ENCODE measurements at regions of chr11 and their contacts with region 1.

Region 1: GRCh38 chr11:207208-207862 is at the starts of genes BET1L and RIC8A:
- DNase-seq: peak; percentile 99
- H3K4me3 Mint-ChIP-seq: peak within 1 kb of the TSS; percentile 98
- H3K27ac Mint-ChIP-seq: peak within 1 kb of the TSS; percentile 100
- H3K4me1 Mint-ChIP-seq: peaks cover 29% of the 10 kb centered on the region
- H3K27me3 Mint-ChIP-seq: no peaks in the 10 kb centered on the region
- total RNA-seq, gene BET1L: 43.6 and 46.9 TPM in 2 replicates
- total RNA-seq, gene RIC8A: 118 and 128 TPM in 2 replicates

Region 2: DNA sequence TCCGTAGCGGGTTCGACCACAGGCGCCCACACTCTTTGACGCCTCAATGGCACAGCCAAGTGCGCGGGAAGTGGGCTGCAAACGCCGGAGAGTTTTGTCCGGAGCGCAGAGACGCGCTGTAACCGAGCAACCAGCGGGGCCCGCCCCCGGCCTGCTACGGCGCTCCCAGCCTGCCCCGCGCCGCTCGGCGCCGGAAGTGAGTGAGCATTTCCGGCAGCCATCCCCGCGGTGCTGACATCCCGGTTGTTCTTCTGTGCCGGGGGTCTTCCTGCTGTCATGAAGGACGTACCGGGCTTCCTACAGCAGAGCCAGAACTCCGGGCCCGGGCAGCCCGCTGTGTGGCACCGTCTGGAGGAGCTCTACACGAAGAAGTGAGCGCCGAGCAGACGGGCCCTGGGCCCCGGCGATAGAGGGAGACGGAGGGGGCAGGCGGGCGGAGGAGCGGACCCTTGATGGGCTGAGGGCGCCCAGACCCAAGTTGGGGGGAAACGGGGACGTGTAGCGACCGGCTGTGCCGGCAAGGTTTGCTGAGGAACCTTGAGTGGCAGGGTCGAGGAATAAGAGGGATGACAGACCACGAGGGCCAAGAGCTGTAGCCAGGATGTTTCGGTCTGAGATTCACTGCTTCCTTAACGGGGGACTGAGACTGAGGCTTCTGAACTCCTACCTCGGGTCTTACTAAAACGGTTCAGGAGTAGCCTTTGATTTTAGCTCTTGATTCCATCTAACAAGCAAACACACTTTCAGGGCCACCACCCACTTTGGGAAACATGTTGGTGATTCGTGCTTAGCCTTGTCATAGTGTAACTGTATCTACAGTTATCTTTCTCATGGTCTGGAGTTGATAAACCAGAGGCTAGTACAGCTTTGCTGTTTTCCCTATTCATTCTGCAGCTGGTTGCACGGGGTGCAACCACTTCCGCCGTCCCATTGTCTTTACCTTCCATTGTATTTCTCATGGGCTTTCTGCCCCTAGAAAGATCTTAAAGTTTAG is 29.7 kb after region 1 on chr11 and contains the start of gene PSMD13:
- intact Hi-C with region 1: loop called (anchors 1 kb)
- DNase-seq: peak; percentile 97
- H3K4me3 Mint-ChIP-seq: peak within 1 kb of the TSS; percentile 97
- H3K27ac Mint-ChIP-seq: peak within 1 kb of the TSS; percentile 100
- H3K4me1 Mint-ChIP-seq: peaks cover 46% of the 10 kb centered on the region
- H3K27me3 Mint-ChIP-seq: no peaks in the 10 kb centered on the region
- total RNA-seq, gene PSMD13: 272 and 275 TPM in 2 replicates

Region 3: DNA sequence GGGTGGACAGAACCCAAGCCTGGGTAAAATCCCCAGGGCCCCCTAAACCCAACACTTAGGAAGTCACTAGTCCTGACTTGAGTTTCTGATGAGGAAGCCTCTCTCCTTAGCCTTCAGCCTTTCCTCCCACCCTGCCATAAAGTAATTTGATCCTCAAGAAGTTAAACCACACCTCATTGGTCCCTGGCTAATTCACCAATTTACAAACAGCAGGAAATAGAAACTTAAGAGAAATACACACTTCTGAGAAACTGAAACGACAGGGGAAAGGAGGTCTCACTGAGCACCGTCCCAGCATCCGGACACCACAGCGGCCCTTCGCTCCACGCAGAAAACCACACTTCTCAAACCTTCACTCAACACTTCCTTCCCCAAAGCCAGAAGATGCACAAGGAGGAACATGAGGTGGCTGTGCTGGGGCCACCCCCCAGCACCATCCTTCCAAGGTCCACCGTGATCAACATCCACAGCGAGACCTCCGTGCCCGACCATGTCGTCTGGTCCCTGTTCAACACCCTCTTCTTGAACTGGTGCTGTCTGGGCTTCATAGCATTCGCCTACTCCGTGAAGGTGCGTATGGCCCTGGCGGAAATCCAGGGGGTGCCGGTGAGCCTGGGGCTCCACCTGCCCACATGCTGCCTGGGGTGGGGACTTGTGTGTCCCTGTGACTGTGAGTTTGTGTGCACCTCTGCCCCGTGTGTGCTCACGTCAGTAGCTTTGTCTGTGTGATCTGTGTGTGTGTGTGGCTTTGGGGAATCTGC is 106.6 kb after region 1 on chr11 and contains the start of gene IFITM1:
- intact Hi-C with region 1: loop called (anchors 1 kb)
- DNase-seq: peak; percentile 93
- H3K4me3 Mint-ChIP-seq: peak within 1 kb of the TSS; percentile 96
- H3K27ac Mint-ChIP-seq: peak within 1 kb of the TSS; percentile 98
- H3K4me1 Mint-ChIP-seq: peaks cover 36% of the 10 kb centered on the region
- H3K27me3 Mint-ChIP-seq: no peaks in the 10 kb centered on the region
- total RNA-seq, gene IFITM1: 241 and 256 TPM in 2 replicates

Region 4: DNA sequence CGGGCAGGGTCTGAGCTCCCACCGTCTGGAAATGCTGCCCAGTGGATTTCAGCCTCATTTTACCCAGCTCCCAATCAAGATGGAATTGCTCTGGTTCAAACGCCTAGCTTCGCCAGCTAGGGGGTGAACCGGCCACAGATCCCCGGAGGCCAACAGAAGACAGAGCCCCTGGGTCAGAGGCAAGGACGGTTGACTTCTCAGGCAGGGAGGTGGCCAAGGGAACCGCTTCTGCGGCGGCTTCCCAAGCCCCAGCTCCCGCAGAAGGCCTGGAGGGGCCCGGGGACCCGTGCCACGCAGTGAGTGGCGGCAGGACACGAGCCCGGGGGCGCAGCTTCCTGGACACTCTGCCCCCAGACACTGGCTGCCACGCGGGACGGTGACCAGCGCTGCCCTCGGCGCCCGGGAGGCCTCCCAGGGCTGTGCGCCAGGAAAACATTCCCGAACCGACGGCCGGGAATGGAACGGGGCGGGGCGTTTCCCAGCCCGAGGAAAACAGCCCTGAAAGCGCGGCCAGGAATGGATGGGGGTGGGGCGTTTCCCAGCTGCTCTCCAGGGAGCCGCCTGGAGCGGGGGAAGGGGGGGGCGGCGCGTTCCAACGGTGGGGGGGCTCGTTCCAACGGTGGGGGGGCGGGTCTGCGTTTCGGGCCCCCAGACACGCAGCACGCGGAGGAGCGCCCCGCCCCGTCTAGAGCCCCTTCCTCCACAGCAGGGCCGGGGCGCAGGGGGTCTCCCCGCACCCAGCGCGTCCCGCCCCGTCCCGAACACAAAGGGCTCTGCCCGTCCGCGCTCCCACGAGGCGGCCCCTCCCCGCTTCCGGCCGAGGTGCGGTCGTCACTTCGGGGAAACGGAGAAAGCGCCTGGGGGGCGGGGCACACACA is 148.5 kb after region 1 on chr11:
- intact Hi-C with region 1: loop called (anchors 5 kb)
- DNase-seq: peak; percentile 97
- H3K4me3 Mint-ChIP-seq: peak overlapping the region; percentile 89
- H3K27ac Mint-ChIP-seq: peak overlapping the region; percentile 95
- H3K4me1 Mint-ChIP-seq: peaks cover 26% of the 10 kb centered on the region
- H3K27me3 Mint-ChIP-seq: peaks cover 5% of the 10 kb centered on the region

Region 5: DNA sequence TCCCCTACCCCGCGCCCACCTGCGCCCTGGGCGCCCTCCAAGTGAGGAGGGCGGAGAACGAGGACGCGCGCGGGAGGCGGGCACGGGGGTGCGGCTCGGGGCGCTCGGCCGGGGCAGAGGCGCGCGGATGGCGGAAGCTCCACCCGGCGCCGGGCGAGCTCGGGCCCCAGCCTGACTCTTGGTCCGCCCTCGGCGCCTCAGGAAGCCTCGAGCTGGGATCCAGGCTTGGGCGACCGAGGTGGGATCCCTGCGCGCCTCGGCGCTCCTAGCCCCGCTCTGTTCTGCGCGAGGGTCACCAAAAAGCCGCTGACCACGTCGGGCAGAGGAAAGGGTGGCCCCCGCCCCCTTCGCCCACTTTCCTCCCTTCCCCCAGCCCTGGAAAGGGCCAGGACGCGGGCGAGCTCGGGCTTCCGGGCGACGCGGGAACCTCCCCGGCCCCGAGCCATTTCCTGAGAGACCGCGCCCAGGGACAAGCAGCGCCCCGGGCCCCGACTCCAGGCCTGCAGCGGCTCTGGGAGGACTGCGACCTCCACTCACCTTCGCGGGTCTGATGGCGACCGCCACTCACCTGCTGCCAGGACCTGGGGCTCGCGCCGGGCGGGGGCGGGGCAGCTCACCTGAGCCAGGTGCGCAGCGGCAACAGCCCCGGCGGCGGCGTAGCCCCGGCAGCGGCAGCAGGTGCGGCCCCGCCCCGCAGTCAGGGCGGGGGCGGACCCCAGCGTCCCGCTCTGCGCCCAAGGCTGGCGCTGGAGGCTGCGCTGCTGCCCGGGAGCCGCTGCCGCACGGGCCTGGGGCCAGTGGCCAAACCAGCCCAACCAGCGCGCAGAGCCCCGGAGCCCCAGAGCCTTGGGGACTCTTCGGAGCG is 209.7 kb after region 1 on chr11:
- intact Hi-C with region 1: loop called (anchors 5 kb)
- DNase-seq: peak; percentile 89
- H3K4me3 Mint-ChIP-seq: peak overlapping the region; percentile 90
- H3K27ac Mint-ChIP-seq: peak overlapping the region; percentile 93
- H3K4me1 Mint-ChIP-seq: peaks cover 30% of the 10 kb centered on the region
- H3K27me3 Mint-ChIP-seq: no peaks in the 10 kb centered on the region

Region 6: GRCh38 chr11:447923-448731 is 240.8 kb after region 1 on chr11:
- intact Hi-C with region 1: loop called (anchors 1 kb)
- DNase-seq: peak; percentile 98
- H3K4me3 Mint-ChIP-seq: peak overlapping the region; percentile 97
- H3K27ac Mint-ChIP-seq: peak overlapping the region; percentile 97
- H3K4me1 Mint-ChIP-seq: peaks cover 13% of the 10 kb centered on the region
- H3K27me3 Mint-ChIP-seq: peaks cover 8% of the 10 kb centered on the region